Esophagus muscularis mucosa (tissue), 4 donors: ENCODE measurements at regions of chr4 and their contacts with region 1.

Region 1: DNA sequence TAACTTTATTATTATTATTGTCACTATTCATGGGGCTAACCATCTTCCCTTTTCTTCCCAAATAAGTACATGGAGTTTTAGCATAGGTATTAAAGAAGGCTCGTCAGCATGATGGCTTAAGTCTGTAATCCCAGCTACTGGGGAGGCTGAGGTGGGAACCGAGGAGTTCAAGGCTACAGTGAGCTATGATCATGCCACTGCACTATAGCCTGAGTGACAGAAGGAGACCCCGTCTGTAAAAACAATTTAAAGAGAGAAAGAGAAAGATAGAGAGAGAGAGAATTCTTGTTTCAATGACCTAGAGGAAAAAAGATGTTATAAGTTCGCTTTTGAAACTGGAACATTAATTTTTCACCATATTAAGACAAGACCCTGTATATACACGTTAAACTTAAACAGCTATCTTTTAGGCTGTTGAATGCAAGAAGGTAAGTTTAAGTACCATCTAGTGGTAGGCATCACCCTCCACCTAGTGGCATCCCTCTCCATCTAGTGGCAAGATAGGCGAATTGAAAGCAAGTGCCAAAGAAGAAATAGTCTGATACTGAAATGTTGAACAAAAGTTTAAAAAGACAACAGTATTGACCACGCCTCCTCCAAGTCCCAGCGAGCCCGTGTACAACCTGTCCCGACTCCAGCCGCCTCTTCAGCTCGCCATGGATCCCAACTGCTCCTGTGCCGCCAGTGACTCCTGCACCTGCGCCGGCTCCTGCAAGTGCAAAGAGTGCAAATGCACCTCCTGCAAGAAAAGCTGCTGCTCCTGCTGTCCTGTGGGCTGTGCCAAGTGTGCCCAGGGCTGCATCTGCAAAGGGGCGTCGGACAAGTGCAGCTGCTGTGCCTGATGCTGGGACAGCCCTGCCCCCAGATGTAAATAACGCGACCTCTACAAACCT is 26.0 kb upstream of the YTHDC1 start:
- DNase-seq: no peak
- H3K4me3 ChIP-seq: peak overlapping the region in 1 of 4 donors; percentile 27
- H3K27ac ChIP-seq: no peak overlapping the region
- H3K4me1 ChIP-seq: peaks cover 6 to 12% (median 9%) of the 10 kb centered on the region in 4 donors
- H3K27me3 ChIP-seq: peaks cover 0 to 15% (median 2%) of the 10 kb centered on the region in 4 donors
- CTCF ChIP-seq: peak; percentile 67 to 81 (median 76)
- EP300 ChIP-seq: no peak
- POLR2A ChIP-seq: no peak

Region 2: DNA sequence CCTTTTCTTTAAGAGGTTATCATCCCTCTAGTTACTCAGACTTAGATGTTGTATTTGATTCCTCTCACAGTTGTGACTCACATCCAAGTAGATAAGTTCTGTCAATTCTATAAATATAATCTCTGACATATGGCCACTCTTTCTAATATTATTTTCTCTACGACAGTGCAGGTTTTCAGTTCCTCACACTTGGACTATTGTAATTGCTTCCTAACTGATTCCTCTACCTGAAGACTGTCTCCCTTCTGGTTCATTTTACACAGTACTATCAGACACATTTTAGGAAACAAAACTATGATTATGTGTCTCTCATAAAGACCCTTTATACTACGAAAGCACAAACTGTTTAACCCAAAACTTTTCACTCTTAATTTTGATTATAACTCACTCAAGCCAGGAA is 590.4 kb before region 1 on chr4:
- intact Hi-C with region 1: no loop called
- DNase-seq: no peak
- H3K4me3 ChIP-seq: no peak overlapping the region
- H3K27ac ChIP-seq: no peak overlapping the region
- H3K4me1 ChIP-seq: no peaks in the 10 kb centered on the region
- H3K27me3 ChIP-seq: no peaks in the 10 kb centered on the region
- CTCF ChIP-seq: no peak
- EP300 ChIP-seq: no peak
- POLR2A ChIP-seq: no peak

Region 3: DNA sequence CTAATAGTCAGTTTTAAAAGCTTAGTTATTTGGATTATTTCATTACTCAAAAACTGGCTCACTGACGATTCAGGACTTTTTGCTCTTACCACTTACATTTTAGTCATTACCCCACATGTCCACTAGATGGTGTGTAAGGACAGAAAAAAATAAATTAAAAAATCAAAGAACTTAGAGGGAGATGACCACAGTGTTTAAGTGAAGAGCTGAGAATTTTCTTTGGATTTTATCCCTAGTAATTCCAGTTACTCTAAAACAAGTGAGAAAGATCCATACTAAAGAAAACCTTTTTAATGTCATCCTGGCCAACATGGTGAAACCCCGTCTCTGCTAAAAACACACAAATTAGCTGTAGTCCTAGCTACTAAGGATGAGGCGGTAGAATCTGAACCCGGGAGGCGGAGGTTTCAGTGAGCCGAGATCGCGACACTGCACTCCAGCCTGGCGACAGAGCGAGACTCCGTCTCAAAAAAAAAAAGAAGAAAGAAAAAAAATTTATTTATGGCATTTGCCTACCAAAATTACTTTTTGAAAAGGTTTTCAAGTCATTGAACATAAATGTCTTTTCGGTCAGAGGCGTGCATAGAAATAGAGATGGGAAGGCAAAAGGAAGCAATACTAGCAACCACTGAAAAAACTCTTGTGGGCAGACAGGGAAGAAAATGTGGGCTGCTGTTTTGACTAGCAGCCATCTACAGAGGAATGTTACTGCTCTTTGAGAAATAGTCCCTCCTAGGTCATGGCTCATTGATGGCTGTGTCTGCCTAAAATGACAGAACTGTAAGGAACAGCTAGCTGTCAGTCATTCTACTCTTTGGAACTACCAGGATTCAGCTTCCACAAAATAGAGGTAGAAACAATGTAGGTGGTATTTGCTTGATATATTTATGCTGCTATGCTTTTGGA is 103.8 kb before region 1 on chr4:
- intact Hi-C with region 1: loop called (anchors 2 kb)
- DNase-seq: no peak
- H3K4me3 ChIP-seq: peak overlapping the region; percentile 1 to 35 (median 14)
- H3K27ac ChIP-seq: no peak overlapping the region
- H3K4me1 ChIP-seq: peaks cover 0 to 7% (median 0%) of the 10 kb centered on the region in 4 donors
- H3K27me3 ChIP-seq: peaks cover 0 to 17% (median 7%) of the 10 kb centered on the region in 4 donors
- CTCF ChIP-seq: peak; percentile 73 to 80 (median 76)
- EP300 ChIP-seq: no peak
- POLR2A ChIP-seq: no peak

Region 4: GRCh38 chr4:68655764-68656444 is 280.0 kb after region 1 on chr4:
- intact Hi-C with region 1: no loop called
- DNase-seq: no peak
- H3K4me3 ChIP-seq: no peak overlapping the region
- H3K27ac ChIP-seq: no peak overlapping the region
- H3K4me1 ChIP-seq: no peaks in the 10 kb centered on the region
- H3K27me3 ChIP-seq: no peaks in the 10 kb centered on the region
- CTCF ChIP-seq: no peak
- EP300 ChIP-seq: no peak
- POLR2A ChIP-seq: no peak

Region 5: DNA sequence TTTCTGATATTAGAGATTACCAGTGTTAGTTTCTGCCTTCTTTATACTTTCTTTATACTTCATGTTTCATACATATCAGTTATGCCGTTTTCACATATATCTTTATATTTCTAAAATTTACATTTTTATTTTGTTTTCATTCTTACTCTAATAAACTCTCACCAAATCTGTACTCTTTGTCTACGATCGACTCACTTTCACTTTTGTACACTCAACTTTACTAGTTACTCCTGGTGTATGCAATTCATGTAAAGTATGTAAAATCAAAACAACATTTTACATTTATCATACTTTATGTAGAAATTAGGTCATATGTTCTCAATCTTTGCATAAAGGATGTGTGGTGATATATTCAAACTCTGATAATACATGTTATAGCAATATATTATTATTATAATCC is 515.8 kb after region 1 on chr4:
- intact Hi-C with region 1: no loop called
- DNase-seq: no peak
- H3K4me3 ChIP-seq: no peak overlapping the region
- H3K27ac ChIP-seq: no peak overlapping the region
- H3K4me1 ChIP-seq: no peaks in the 10 kb centered on the region
- H3K27me3 ChIP-seq: no peaks in the 10 kb centered on the region
- CTCF ChIP-seq: no peak
- EP300 ChIP-seq: no peak
- POLR2A ChIP-seq: no peak